CD4-positive, alpha-beta T cell (primary cell): ENCODE measurements at regions of chr15 and their contacts with region 1.

Region 1: GRCh38 chr15:59751552-59752413 is 62.7 kb upstream of the BNIP2 start:
- DNase-seq: peak in 5 of 14 experiments; percentile 3 to 84 (median 80)
- ATAC-seq: peak; percentile 99
- H3K4me3 ChIP-seq: no peak overlapping the region
- H3K4me3 Mint-ChIP-seq: no peak overlapping the region
- H3K27ac ChIP-seq: no peak overlapping the region
- H3K27ac Mint-ChIP-seq: no peak overlapping the region
- H3K4me1 ChIP-seq: peaks cover 4% of the 10 kb centered on the region
- H3K4me1 Mint-ChIP-seq: peaks cover 17% of the 10 kb centered on the region
- H3K27me3 ChIP-seq: no peaks in the 10 kb centered on the region
- H3K27me3 Mint-ChIP-seq: peaks cover 6% of the 10 kb centered on the region
- CTCF ChIP-seq: peak; percentile 89

Region 2: DNA sequence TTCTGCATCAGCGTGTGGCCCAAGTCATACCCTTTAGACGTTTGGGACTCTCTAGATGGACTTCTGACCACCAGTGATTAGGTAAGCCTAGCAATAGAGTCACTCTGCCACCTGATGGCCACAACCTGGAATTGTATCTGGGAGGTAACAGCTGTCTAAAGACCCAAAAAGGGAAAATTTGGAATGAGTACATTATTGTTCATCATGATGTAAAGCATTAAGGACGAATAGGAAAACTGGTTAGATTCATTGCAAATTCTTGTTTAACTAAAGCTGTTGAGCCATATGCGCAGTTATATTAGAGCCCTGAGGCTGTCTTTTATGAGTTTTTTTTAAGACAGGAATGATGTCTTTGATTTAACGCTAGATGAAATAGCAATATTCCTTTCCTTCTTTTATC is 250.2 kb before region 1 on chr15:
- CTCF ChIA-PET with region 1: no interaction called
- POLR2A ChIA-PET with region 1: no interaction called
- intact Hi-C with region 1: no loop called
- DNase-seq: peak in 3 of 14 experiments; percentile 13 to 45 (median 40)
- ATAC-seq: no peak
- H3K4me3 ChIP-seq: no peak overlapping the region
- H3K4me3 Mint-ChIP-seq: no peak overlapping the region
- H3K27ac ChIP-seq: no peak overlapping the region
- H3K27ac Mint-ChIP-seq: no peak overlapping the region
- H3K4me1 ChIP-seq: no peaks in the 10 kb centered on the region
- H3K4me1 Mint-ChIP-seq: no peaks in the 10 kb centered on the region
- H3K27me3 ChIP-seq: no peaks in the 10 kb centered on the region
- H3K27me3 Mint-ChIP-seq: peaks cover 9% of the 10 kb centered on the region
- CTCF ChIP-seq: no peak

Region 3: GRCh38 chr15:59725172-59725486 is 26.7 kb before region 1 on chr15:
- CTCF ChIA-PET with region 1: interaction called, 16 read pairs
- POLR2A ChIA-PET with region 1: no interaction called
- intact Hi-C with region 1: no loop called
- DNase-seq: no peak
- ATAC-seq: no peak
- H3K4me3 ChIP-seq: no peak overlapping the region
- H3K4me3 Mint-ChIP-seq: no peak overlapping the region
- H3K27ac ChIP-seq: no peak overlapping the region
- H3K27ac Mint-ChIP-seq: no peak overlapping the region
- H3K4me1 ChIP-seq: no peaks in the 10 kb centered on the region
- H3K4me1 Mint-ChIP-seq: no peaks in the 10 kb centered on the region
- H3K27me3 ChIP-seq: peaks cover 0 to 18% of the 10 kb centered on the region in 2 experiments
- H3K27me3 Mint-ChIP-seq: peaks cover 23% of the 10 kb centered on the region
- CTCF ChIP-seq: peak; percentile 39

Region 4: DNA sequence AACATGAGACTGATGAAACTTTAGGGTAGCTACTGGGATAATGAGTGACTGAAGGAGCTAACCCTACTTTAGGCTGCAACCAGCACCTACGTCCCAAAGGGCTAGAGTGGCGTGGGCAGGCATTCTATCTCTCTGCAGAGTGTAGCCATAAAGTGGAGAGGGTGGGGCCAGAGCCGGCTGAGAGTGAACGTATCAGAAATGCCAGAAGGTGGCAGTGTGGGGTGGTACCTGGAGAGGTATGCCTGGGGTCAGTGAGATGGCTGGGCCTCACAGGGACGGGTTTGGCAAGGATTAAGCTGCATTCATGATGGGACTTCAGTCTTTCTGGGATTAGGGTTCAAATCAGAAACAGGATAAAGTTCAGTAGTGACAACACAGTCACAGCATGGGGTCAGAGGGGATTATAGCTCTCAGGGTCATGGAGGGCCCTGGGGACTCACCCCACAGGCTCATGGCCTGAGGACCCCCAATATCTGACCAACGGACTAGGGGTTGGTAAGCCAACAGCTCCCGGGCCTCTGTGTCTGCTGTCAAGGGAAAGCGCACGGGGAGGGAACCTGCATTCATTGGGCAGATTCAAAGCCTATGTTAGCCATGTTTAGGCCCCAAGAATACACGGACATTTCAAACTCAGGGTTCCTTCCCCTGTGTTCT is 165.8 kb after region 1 on chr15:
- CTCF ChIA-PET with region 1: interaction called, 18 read pairs
- POLR2A ChIA-PET with region 1: interaction called, 3 read pairs
- intact Hi-C with region 1: loop called (anchors 2 kb)
- DNase-seq: peak; percentile 47 to 79 (median 60)
- ATAC-seq: peak; percentile 80
- H3K4me3 ChIP-seq: no peak overlapping the region
- H3K4me3 Mint-ChIP-seq: no peak overlapping the region
- H3K27ac ChIP-seq: no peak overlapping the region
- H3K27ac Mint-ChIP-seq: no peak overlapping the region
- H3K4me1 ChIP-seq: peaks cover 19% of the 10 kb centered on the region
- H3K4me1 Mint-ChIP-seq: peaks cover 15% of the 10 kb centered on the region
- H3K27me3 ChIP-seq: no peaks in the 10 kb centered on the region
- H3K27me3 Mint-ChIP-seq: peaks cover 30% of the 10 kb centered on the region
- CTCF ChIP-seq: peak; percentile 68

Region 5: GRCh38 chr15:60006203-60006862 is 254.6 kb after region 1 on chr15:
- CTCF ChIA-PET with region 1: interaction called, 6 read pairs
- POLR2A ChIA-PET with region 1: no interaction called
- intact Hi-C with region 1: loop called in 1 of 2 experiments (anchors 5 kb)
- DNase-seq: peak in 13 of 14 experiments; percentile 31 to 89 (median 58)
- ATAC-seq: peak; percentile 81
- H3K4me3 ChIP-seq: peak overlapping the region; percentile 55
- H3K4me3 Mint-ChIP-seq: peak overlapping the region; percentile 91
- H3K27ac ChIP-seq: no peak overlapping the region
- H3K27ac Mint-ChIP-seq: peak overlapping the region; percentile 81
- H3K4me1 ChIP-seq: peaks cover 38% of the 10 kb centered on the region
- H3K4me1 Mint-ChIP-seq: peaks cover 45% of the 10 kb centered on the region
- H3K27me3 ChIP-seq: peaks cover 67 to 100% of the 10 kb centered on the region in 2 experiments
- H3K27me3 Mint-ChIP-seq: peaks cover 98% of the 10 kb centered on the region
- CTCF ChIP-seq: no peak

Region 6: DNA sequence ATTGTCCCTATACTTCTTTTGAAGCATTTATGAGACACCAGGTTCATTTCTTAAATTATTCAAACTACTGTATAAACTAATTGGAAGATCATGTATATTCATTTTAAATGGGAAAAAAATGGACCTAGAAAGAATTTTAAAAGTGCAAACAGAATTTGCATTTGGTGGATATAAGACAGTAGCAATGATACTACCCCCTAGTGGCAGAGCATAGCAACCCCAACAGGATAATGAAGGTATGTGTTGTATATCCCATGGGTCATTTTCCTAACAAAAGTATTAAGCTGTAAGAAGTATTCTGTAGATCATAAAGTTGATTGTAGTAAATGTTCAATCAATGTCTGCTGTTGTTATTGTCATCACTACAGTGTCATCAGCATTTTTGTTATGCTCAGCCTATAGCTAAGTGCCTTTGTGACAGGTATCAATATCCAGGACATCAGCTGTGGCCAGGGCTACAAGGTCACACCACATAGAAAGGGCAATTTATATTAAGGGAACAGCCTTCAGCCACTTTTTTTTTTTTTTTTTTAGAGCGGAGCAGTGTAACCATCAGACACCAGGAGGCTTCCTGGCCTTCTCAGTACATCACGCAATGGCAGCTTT is 428.1 kb after region 1 on chr15:
- CTCF ChIA-PET with region 1: interaction called, 13 read pairs
- POLR2A ChIA-PET with region 1: interaction called, 5 read pairs
- intact Hi-C with region 1: loop called (anchors 1 kb)
- DNase-seq: peak in 11 of 14 experiments; percentile 2 to 72 (median 14)
- ATAC-seq: peak; percentile 64
- H3K4me3 ChIP-seq: no peak overlapping the region
- H3K4me3 Mint-ChIP-seq: no peak overlapping the region
- H3K27ac ChIP-seq: no peak overlapping the region
- H3K27ac Mint-ChIP-seq: no peak overlapping the region
- H3K4me1 ChIP-seq: no peaks in the 10 kb centered on the region
- H3K4me1 Mint-ChIP-seq: no peaks in the 10 kb centered on the region
- H3K27me3 ChIP-seq: no peaks in the 10 kb centered on the region
- H3K27me3 Mint-ChIP-seq: peaks cover 23% of the 10 kb centered on the region
- CTCF ChIP-seq: peak; percentile 99